Activated CD8-positive, alpha-beta T cell treated with anti-CD3 and anti-CD28 coated beads for 36 hours (primary cell): ENCODE measurements at regions of chr12 and their contacts with region 1.

Region 1: GRCh38 chr12:91382081-91382543 is 199.5 kb upstream of the DCN start:
- DNase-seq: peak; percentile 92
- ATAC-seq: peak; percentile 79
- H3K4me3 Mint-ChIP-seq: peak overlapping the region; percentile 77
- H3K27ac Mint-ChIP-seq: no peak overlapping the region
- H3K4me1 Mint-ChIP-seq: peaks cover 3% of the 10 kb centered on the region
- H3K27me3 Mint-ChIP-seq: no peaks in the 10 kb centered on the region
- CTCF ChIP-seq: peak; percentile 83

Region 2: DNA sequence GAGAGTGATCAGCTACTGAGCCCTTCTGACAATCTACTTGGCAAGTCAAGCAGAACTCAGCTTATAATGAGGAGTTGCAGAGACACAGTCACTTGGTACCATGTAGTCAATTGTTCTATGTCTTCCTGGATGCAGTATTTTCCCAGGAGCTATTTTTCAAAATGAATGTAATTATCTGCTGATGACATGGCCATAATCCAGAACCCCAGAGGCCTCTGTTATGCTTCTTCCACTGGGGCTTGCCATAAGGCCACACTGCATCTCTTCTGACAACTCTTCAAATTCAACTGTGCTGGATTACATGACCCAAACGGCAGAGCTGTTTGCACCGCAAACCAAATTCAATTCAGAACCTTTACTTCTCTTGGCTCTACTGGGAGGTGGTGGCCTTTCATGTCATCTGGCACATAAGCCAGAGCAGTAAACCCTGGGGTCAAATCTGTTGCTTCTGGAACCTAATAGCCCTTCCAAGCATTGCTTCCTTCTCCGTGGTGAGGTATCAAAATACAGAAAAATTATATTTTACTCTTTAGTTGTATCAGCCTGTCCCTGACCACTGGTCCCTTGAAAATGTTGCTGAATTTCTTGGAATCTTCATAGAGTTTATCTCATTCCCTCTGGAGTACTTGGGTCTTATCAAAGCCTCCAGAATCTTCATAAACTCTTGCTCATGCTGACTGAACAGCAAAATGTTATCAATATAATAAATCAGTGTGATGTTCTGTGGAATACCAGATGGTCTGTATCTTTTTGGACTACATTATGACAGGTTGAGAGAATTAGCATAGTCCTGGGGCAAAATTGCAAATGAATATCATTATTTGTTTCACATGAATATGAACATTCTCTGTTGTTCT is 120.1 kb before region 1 on chr12:
- CTCF ChIA-PET with region 1: no interaction called
- POLR2A ChIA-PET with region 1: no interaction called
- intact Hi-C with region 1: no loop called
- DNase-seq: no peak
- ATAC-seq: no peak
- H3K4me3 Mint-ChIP-seq: no peak overlapping the region
- H3K27ac Mint-ChIP-seq: no peak overlapping the region
- H3K4me1 Mint-ChIP-seq: no peaks in the 10 kb centered on the region
- H3K27me3 Mint-ChIP-seq: peaks cover 6% of the 10 kb centered on the region
- CTCF ChIP-seq: no peak

Region 3: DNA sequence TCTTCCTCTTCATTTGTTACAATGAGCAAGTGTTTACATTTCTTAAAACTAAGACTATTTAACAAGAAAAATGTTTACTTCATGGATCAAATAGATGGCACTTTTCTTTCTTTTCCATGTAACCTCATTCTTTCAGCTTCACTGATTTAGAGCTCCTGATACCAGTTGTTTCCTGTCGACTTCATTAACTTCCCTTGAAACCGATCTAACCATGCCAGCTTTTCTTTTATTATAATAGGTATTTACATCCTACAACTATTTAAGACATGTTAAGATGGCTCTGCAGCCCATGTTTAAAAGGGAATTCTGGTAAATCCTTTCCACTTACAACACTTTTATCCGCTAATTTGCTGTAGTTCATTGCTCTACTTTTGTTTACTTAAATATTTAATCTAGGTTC is 92.2 kb before region 1 on chr12:
- CTCF ChIA-PET with region 1: no interaction called
- POLR2A ChIA-PET with region 1: no interaction called
- intact Hi-C with region 1: no loop called
- DNase-seq: no peak
- ATAC-seq: no peak
- H3K4me3 Mint-ChIP-seq: no peak overlapping the region
- H3K27ac Mint-ChIP-seq: no peak overlapping the region
- H3K4me1 Mint-ChIP-seq: no peaks in the 10 kb centered on the region
- H3K27me3 Mint-ChIP-seq: no peaks in the 10 kb centered on the region
- CTCF ChIP-seq: no peak

Region 4: GRCh38 chr12:91367234-91367849 is 14.8 kb before region 1 on chr12:
- CTCF ChIA-PET with region 1: interaction called, 23 read pairs
- POLR2A ChIA-PET with region 1: no interaction called
- intact Hi-C with region 1: no loop called
- DNase-seq: no peak
- ATAC-seq: no peak
- H3K4me3 Mint-ChIP-seq: no peak overlapping the region
- H3K27ac Mint-ChIP-seq: no peak overlapping the region
- H3K4me1 Mint-ChIP-seq: no peaks in the 10 kb centered on the region
- H3K27me3 Mint-ChIP-seq: no peaks in the 10 kb centered on the region
- CTCF ChIP-seq: peak; percentile 42

Region 5: GRCh38 chr12:91493308-91493707 is 111.2 kb after region 1 on chr12:
- CTCF ChIA-PET with region 1: no interaction called
- POLR2A ChIA-PET with region 1: no interaction called
- intact Hi-C with region 1: no loop called
- DNase-seq: no peak
- ATAC-seq: peak; percentile 39
- H3K4me3 Mint-ChIP-seq: no peak overlapping the region
- H3K27ac Mint-ChIP-seq: peak overlapping the region; percentile 72
- H3K4me1 Mint-ChIP-seq: peaks cover 7% of the 10 kb centered on the region
- H3K27me3 Mint-ChIP-seq: no peaks in the 10 kb centered on the region
- CTCF ChIP-seq: no peak

Region 6: GRCh38 chr12:91577586-91578539 is 195.8 kb after region 1 on chr12:
- CTCF ChIA-PET with region 1: interaction called, 16 read pairs
- POLR2A ChIA-PET with region 1: no interaction called
- intact Hi-C with region 1: no loop called
- DNase-seq: no peak
- ATAC-seq: peak; percentile 85
- H3K4me3 Mint-ChIP-seq: peak overlapping the region; percentile 65
- H3K27ac Mint-ChIP-seq: no peak overlapping the region
- H3K4me1 Mint-ChIP-seq: peaks cover 15% of the 10 kb centered on the region
- H3K27me3 Mint-ChIP-seq: no peaks in the 10 kb centered on the region
- CTCF ChIP-seq: peak; percentile 73

Region 7: DNA sequence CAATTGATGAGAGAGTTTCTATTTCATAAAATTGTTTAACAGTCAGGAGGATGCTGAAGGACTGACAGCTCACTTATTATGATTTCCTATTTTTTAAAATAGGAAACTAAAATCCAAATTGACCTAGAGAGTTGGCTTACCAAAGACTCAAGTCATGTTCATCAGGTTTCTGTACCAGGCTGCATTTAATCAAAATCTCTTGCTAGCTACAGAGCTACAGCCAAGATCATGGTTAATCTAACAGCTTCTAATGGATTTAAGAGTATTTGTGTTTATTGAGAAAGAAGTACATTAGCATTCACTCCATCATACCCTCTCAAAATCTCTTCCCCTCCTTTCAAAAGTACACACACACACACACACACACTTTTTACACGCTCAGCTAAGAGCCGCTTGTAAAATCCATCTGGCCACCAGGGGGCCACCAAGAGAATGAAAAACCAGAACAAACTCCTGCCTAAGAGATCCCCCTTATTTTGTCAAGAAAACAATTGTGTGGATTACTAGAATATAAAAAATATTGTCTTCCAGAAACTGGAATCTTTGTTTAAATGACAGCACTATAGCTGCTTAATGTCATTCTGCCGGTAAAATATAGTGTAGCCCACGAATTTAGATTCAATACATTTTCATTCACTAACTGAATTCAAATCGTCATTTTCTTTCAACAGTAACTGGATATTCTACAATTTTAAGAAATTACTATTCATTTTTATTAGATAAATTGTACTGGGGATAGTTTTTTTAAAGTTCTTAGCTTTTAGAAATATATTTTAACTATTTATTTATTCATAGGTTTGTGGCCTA is 429.6 kb after region 1 on chr12:
- CTCF ChIA-PET with region 1: interaction called, 13 read pairs
- POLR2A ChIA-PET with region 1: no interaction called
- intact Hi-C with region 1: loop called (anchors 10 kb)
- DNase-seq: peak; percentile 87
- ATAC-seq: peak; percentile 78
- H3K4me3 Mint-ChIP-seq: no peak overlapping the region
- H3K27ac Mint-ChIP-seq: peak overlapping the region; percentile 79
- H3K4me1 Mint-ChIP-seq: peaks cover 26% of the 10 kb centered on the region
- H3K27me3 Mint-ChIP-seq: no peaks in the 10 kb centered on the region
- CTCF ChIP-seq: peak; percentile 92

Region 8: GRCh38 chr12:92145731-92146496 is 763.8 kb after region 1 on chr12 and contains the start of gene BTG1:
- CTCF ChIA-PET with region 1: interaction called, 20 read pairs
- POLR2A ChIA-PET with region 1: interaction called, 3 read pairs
- intact Hi-C with region 1: loop called (anchors 5 kb)
- DNase-seq: peak; percentile 99
- ATAC-seq: peak; percentile 83
- H3K4me3 Mint-ChIP-seq: peak within 1 kb of the TSS; percentile 97
- H3K27ac Mint-ChIP-seq: peak within 1 kb of the TSS; percentile 95
- H3K4me1 Mint-ChIP-seq: peaks cover 21% of the 10 kb centered on the region
- H3K27me3 Mint-ChIP-seq: no peaks in the 10 kb centered on the region
- CTCF ChIP-seq: no peak
- total RNA-seq, gene BTG1: 197 to 200 TPM

Region 9: DNA sequence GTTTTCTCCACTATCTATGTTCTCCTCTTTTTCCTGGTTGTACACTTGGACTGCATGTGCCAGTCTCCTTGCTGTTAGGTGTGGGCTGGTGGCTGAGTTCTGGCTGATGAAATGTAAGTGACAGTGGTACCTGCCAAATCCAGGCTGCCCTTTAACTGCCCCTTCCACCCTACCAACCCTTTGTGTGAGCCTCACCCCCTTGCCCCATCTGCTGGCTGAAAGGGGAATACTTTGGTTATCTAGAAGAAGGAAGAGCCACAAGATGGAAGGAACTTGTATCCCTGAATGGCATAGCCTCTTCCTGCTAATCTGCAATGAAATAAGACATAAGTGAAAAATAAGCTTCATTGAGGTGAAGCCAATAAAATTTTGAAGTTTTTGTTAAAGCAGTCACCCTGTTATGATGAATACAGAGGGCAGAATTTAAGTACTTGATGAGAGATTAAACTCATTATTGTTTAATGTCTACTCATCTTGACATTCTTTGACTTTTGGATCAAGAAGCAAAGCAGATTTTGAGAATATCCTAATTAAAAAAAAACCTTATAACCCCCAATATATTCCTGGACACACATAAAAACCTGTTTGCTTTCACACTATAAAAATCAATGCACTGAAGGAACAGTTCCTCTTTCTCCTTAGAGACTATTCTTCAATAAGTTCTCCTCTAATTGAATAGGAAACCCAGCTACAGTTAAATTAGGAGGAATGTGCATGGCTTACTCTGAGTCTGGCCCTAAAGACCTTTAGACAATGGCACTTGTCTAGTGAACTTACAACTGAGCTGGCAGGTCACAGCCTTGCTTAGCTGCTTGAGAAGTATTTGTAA is 1026.2 kb after region 1 on chr12:
- CTCF ChIA-PET with region 1: interaction called, 5 read pairs
- POLR2A ChIA-PET with region 1: no interaction called
- intact Hi-C with region 1: loop called (anchors 10 kb)
- DNase-seq: peak; percentile 81
- ATAC-seq: peak; percentile 50
- H3K4me3 Mint-ChIP-seq: no peak overlapping the region
- H3K27ac Mint-ChIP-seq: peak overlapping the region; percentile 63
- H3K4me1 Mint-ChIP-seq: peaks cover 41% of the 10 kb centered on the region
- H3K27me3 Mint-ChIP-seq: no peaks in the 10 kb centered on the region
- CTCF ChIP-seq: peak; percentile 58

Region 10: DNA sequence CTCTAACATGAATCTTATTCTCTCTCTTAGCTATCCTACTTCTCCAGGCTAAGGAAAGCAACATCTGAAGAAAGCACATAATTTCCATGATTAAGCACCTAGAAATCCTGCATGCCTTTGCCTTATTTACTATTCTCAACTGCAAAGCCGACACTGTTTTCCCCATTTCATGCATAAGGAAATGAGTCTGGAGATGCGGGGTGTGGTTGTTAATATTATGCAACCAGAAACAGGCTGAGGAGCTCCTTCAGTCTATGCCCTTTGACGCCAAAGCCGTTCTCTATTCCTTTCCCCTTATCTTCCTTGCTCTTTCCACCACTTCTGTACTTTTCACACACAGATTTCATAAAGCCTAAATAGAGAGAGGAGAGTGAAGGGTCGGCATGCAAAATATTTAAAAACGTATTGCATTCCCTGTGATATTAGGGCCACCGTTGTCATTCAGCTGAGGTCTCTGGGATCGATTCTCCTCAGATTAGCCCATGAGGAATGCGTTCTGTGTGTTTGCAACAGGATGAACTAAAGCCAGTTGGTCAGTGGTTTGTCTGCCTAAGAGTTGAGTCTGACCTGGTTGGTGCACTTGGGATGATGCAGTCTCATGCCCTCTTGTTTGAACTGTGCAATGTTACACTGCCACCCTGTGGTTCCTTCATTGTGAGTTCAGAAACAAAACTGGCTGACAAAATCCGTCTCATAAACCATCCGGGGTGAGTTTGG is 1267.6 kb after region 1 on chr12:
- CTCF ChIA-PET with region 1: interaction called, 22 read pairs
- POLR2A ChIA-PET with region 1: interaction called, 4 read pairs
- intact Hi-C with region 1: loop called (anchors 10 kb)
- DNase-seq: peak; percentile 71
- ATAC-seq: peak; percentile 81
- H3K4me3 Mint-ChIP-seq: no peak overlapping the region
- H3K27ac Mint-ChIP-seq: no peak overlapping the region
- H3K4me1 Mint-ChIP-seq: peaks cover 8% of the 10 kb centered on the region
- H3K27me3 Mint-ChIP-seq: no peaks in the 10 kb centered on the region
- CTCF ChIP-seq: peak; percentile 66